ENCODE measurements at regions of chr1 and their contacts with region 1.

Region 1: DNA sequence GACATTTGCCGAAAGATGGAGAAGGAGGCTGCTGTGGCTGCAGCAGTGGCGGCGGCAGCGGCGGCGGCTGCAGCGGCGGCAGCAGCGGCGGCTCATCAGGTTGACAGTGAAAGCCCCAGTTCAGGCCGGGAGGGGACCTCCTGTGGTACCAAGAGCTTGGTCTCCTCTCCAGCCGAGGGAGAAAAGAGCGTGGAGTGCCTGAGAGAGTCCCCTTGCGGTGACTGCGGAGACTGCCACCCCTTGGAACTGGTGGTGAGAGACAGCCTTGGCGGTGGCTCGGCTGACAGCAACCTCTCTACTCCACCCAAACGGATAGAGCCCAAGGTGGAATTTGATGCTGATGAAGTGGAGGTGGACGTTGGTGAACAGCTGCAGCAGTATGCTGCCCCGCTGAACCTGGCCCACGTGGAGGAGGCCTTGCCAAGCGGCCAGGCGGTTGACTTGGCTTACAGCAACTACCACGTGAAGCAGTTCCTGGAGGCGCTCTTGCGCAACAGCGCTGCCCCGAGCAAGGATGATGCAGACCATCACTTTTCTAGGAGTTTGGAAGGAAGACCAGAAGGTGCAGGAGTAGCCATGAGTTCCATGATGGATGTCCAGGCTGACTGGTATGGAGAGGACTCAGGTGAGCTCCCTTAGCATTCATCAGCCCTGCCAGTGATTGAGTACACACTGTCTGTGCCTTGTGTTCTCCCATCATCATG is 6.3 kb downstream of the ZBTB8B start:
- DNase-seq: no peak
- H3K4me3 ChIP-seq: no peak overlapping the region
- H3K27ac ChIP-seq: no peak overlapping the region
- H3K4me1 ChIP-seq: no peaks in the 10 kb centered on the region
- H3K27me3 ChIP-seq: peaks cover 2% of the 10 kb centered on the region
- CTCF ChIP-seq: peak; percentile 19 to 52

Region 2: GRCh38 chr1:32142446-32143301 is 328.5 kb before region 1 on chr1:
- CTCF ChIA-PET with region 1: no interaction called
- dilution Hi-C with region 1: no loop called
- in situ Hi-C with region 1: no loop called
- intact Hi-C with region 1: no loop called
- DNase-seq: peak; percentile 44
- H3K4me3 ChIP-seq: no peak overlapping the region
- H3K27ac ChIP-seq: no peak overlapping the region
- H3K4me1 ChIP-seq: peaks cover 18% of the 10 kb centered on the region
- H3K27me3 ChIP-seq: no peaks in the 10 kb centered on the region
- CTCF ChIP-seq: no peak

Region 3: DNA sequence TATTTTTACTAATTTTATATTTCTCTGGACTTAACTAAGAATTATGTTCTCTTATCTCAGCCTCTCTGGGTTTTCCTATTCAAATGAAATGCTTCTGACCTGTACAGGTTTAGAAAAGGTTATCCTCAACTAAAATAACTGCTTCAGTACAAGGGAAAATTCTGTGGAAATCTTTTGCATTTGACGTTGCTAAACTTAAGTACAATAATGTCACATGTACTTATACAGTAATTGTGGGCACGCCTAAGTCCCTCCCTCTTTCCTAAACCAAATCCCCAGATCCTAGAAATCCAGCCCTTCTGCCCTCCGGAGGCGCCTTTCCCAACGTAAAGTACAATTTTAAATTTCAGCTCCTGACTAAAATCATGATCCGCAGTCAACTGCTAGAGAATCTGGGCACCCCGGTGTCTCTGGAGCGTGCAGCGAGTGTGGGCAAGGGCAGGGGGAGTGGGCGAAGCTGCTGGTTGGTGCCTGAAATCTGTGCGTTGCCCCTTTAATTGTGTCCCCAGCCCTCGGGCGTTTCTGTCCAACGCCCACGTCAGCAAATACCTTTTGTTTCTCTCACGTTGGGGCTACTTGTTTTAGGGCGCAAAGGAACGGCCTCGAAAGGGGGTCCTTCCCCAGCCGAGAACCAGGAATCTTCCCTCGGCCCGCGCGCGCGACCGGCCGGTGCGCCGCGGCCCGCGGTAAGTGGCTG is 67.9 kb after region 1 on chr1 and contains the start of gene ZBTB8A:
- CTCF ChIA-PET with region 1: no interaction called
- dilution Hi-C with region 1: loop called (anchors 10 kb)
- in situ Hi-C with region 1: no loop called
- intact Hi-C with region 1: no loop called
- DNase-seq: peak; percentile 56
- H3K4me3 ChIP-seq: peak within 1 kb of the TSS; percentile 49 to 74 (median 56)
- H3K27ac ChIP-seq: peak within 1 kb of the TSS; percentile 24
- H3K4me1 ChIP-seq: peaks cover 10% of the 10 kb centered on the region
- H3K27me3 ChIP-seq: no peaks in the 10 kb centered on the region
- CTCF ChIP-seq: peak in 1 of 2 donors; percentile 4
- total RNA-seq, gene ZBTB8A: 7.2 to 11.5 TPM

Region 4: GRCh38 chr1:32557812-32558211 is 86.7 kb after region 1 on chr1:
- CTCF ChIA-PET with region 1: no interaction called
- dilution Hi-C with region 1: no loop called
- in situ Hi-C with region 1: no loop called
- intact Hi-C with region 1: no loop called
- DNase-seq: no peak
- H3K4me3 ChIP-seq: no peak overlapping the region
- H3K27ac ChIP-seq: no peak overlapping the region
- H3K4me1 ChIP-seq: no peaks in the 10 kb centered on the region
- H3K27me3 ChIP-seq: no peaks in the 10 kb centered on the region
- CTCF ChIP-seq: no peak

Region 5: DNA sequence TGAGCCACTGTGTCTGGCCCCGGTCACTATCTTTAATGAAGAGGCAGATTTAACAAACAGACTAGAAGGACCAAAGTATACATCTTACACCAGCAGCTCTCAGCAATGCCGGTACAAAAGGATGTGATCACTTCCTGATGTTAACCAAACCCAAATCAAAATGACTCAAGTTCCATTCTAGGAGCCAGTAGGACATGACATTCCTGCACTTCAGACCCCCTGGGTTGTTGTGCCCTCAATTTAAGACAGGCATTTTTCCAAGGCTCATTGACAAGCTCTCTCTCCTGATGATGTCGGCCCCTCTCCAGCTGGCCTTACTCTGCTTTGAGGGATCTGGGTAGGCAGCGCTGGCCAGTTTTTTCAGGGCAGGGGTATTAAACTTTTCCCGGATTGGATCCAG is 310.9 kb after region 1 on chr1:
- CTCF ChIA-PET with region 1: no interaction called
- dilution Hi-C with region 1: no loop called
- in situ Hi-C with region 1: no loop called
- intact Hi-C with region 1: no loop called
- DNase-seq: no peak
- H3K4me3 ChIP-seq: no peak overlapping the region
- H3K27ac ChIP-seq: no peak overlapping the region
- H3K4me1 ChIP-seq: peaks cover 9% of the 10 kb centered on the region
- H3K27me3 ChIP-seq: no peaks in the 10 kb centered on the region
- CTCF ChIP-seq: no peak

Measured in mammary epithelial cell (primary cell).